ENCODE measurements at regions of chr2 and their contacts with region 1.

Region 1: GRCh38 chr2:127479866-127480743 is 46.2 kb downstream of the IWS1 start:
- DNase-seq: no peak
- H3K4me3 ChIP-seq: no peak overlapping the region
- H3K27ac ChIP-seq: no peak overlapping the region
- H3K4me1 ChIP-seq: no peaks in the 10 kb centered on the region
- H3K27me3 ChIP-seq: no peaks in the 10 kb centered on the region
- CTCF ChIP-seq: no peak
- EP300 ChIP-seq: no peak
- POLR2A ChIP-seq: no peak

Region 2: GRCh38 chr2:127324635-127325034 is 155.5 kb before region 1 on chr2:
- intact Hi-C with region 1: loop called (anchors 2 kb)
- DNase-seq: no peak
- H3K4me3 ChIP-seq: no peak overlapping the region
- H3K27ac ChIP-seq: no peak overlapping the region
- H3K4me1 ChIP-seq: no peaks in the 10 kb centered on the region
- H3K27me3 ChIP-seq: no peaks in the 10 kb centered on the region
- CTCF ChIP-seq: peak in 3 of 4 experiments; percentile 49 to 59 (median 51)
- EP300 ChIP-seq: no peak
- POLR2A ChIP-seq: no peak

Region 3: DNA sequence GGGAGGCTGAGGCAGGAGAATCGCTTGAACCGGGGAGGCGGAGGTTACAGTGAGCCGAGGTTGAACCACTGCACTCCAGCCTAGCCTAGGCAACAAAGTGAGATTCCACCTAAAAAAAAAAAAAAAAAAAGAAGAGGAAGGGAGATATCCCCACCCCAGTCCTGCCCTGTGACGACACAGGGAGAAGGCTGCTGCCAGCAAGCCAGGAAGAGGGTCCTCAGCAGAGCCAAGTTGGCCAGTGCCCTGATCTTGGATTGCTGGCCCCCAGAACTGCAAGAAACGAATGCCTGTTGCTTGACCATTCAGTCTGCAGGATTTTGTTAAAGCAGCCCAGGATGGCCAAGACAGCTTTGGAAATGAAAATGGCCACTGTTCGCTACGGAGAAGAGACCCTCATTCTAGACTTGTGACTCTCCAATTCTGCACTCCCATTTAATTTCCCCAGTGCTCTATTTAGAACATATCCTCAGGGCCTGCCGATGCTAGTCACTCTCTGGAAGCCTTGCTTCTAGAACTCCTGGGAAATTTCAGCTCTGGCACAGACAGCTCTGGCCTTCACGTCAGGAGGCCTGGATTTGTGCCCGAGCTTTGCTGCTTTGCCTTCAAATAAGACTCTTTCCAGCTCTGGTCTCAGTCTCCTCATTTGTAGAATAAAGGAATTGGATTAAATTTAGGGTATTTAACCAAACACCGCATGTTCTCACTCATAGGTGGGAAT is 421.4 kb after region 1 on chr2:
- intact Hi-C with region 1: no loop called
- DNase-seq: peak; percentile 92
- H3K4me3 ChIP-seq: no peak overlapping the region
- H3K27ac ChIP-seq: peak overlapping the region; percentile 42 to 84 (median 78)
- H3K4me1 ChIP-seq: peaks cover 0 to 17% (median 10%) of the 10 kb centered on the region in 4 donors
- H3K27me3 ChIP-seq: no peaks in the 10 kb centered on the region
- CTCF ChIP-seq: no peak
- EP300 ChIP-seq: peak in 1 of 4 donors; percentile 4
- POLR2A ChIP-seq: no peak

Region 4: DNA sequence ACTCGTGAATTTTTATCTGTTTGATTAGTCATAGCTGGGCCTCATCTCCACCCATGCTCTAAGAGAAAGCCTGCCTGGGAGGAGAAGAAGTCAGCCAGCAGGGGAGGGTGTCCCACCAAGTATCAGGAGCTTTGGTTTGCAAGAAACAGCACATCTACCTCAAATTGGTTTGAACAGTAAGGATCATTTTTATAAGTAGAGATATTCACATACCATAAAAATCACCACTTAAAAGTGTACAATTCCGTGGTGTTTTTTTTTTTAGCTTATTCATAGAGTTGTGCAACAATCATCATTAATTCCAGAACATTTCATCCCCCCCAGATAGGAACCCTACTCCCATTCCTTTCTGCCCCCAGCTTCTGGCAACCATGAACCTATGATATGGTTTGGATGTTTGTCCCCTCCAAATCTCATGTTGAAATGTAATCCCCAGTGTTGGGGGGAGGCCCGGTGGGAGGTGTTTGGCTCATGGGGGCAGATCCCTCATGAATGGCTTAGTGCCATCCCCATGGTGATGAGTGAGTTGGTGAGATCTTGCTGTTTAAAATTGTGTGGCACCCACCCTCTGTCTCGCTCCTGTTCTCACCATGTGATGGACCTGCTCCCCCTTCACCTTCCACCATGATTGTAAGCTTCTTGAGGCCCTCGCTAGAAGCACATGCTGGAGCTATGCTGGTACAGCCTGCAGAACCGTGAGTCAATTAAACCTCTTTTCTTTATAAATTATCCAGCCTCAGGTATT is 874.8 kb after region 1 on chr2:
- intact Hi-C with region 1: no loop called
- DNase-seq: no peak
- H3K4me3 ChIP-seq: no peak overlapping the region
- H3K27ac ChIP-seq: no peak overlapping the region
- H3K4me1 ChIP-seq: no peaks in the 10 kb centered on the region
- H3K27me3 ChIP-seq: no peaks in the 10 kb centered on the region
- CTCF ChIP-seq: no peak
- EP300 ChIP-seq: no peak
- POLR2A ChIP-seq: no peak

Measured in sigmoid colon (tissue), 7 donors.